CD4-positive, alpha-beta memory T cell (primary cell): ENCODE measurements at regions of chr22 and their contacts with region 1.

Region 1: GRCh38 chr22:40714192-40714951 is 35.1 kb downstream of the MCHR1 start:
- DNase-seq: no peak
- H3K4me3 ChIP-seq: no peak overlapping the region
- H3K4me3 Mint-ChIP-seq: peak overlapping the region in 1 of 8 donors; percentile 12
- H3K27ac ChIP-seq: no peak overlapping the region
- H3K27ac Mint-ChIP-seq: peak overlapping the region in 1 of 7 donors; percentile 42
- H3K4me1 ChIP-seq: peaks cover 9% of the 10 kb centered on the region
- H3K4me1 Mint-ChIP-seq: peaks cover 10 to 16% (median 13%) of the 10 kb centered on the region in 4 donors
- H3K27me3 ChIP-seq: no peaks in the 10 kb centered on the region
- H3K27me3 Mint-ChIP-seq: no peaks in the 10 kb centered on the region

Region 2: GRCh38 chr22:40728731-40729189 is 14.4 kb after region 1 on chr22:
- CTCF ChIA-PET with region 1: interaction called, 4 read pairs
- POLR2A ChIA-PET with region 1: interaction called, 21 read pairs
- intact Hi-C with region 1: loop called (anchors 1 kb)
- DNase-seq: peak; percentile 67 to 84 (median 76)
- H3K4me3 ChIP-seq: peak overlapping the region in 1 of 2 donors; percentile 17
- H3K4me3 Mint-ChIP-seq: peak overlapping the region; percentile 32 to 82 (median 73)
- H3K27ac ChIP-seq: peak overlapping the region; percentile 30
- H3K27ac Mint-ChIP-seq: peak overlapping the region; percentile 83 to 97 (median 95)
- H3K4me1 ChIP-seq: peaks cover 69% of the 10 kb centered on the region
- H3K4me1 Mint-ChIP-seq: peaks cover 35 to 63% (median 49%) of the 10 kb centered on the region in 4 donors
- H3K27me3 ChIP-seq: no peaks in the 10 kb centered on the region
- H3K27me3 Mint-ChIP-seq: no peaks in the 10 kb centered on the region

Region 3: GRCh38 chr22:40757071-40757470 is 42.7 kb after region 1 on chr22:
- CTCF ChIA-PET with region 1: interaction called, 15 read pairs
- POLR2A ChIA-PET with region 1: interaction called, 4 read pairs
- intact Hi-C with region 1: loop called (anchors 1 kb)
- DNase-seq: no peak
- H3K4me3 ChIP-seq: no peak overlapping the region
- H3K4me3 Mint-ChIP-seq: no peak overlapping the region
- H3K27ac ChIP-seq: no peak overlapping the region
- H3K27ac Mint-ChIP-seq: no peak overlapping the region
- H3K4me1 ChIP-seq: no peaks in the 10 kb centered on the region
- H3K4me1 Mint-ChIP-seq: peaks cover 0 to 1% (median 0%) of the 10 kb centered on the region in 4 donors
- H3K27me3 ChIP-seq: no peaks in the 10 kb centered on the region
- H3K27me3 Mint-ChIP-seq: no peaks in the 10 kb centered on the region

Region 4: DNA sequence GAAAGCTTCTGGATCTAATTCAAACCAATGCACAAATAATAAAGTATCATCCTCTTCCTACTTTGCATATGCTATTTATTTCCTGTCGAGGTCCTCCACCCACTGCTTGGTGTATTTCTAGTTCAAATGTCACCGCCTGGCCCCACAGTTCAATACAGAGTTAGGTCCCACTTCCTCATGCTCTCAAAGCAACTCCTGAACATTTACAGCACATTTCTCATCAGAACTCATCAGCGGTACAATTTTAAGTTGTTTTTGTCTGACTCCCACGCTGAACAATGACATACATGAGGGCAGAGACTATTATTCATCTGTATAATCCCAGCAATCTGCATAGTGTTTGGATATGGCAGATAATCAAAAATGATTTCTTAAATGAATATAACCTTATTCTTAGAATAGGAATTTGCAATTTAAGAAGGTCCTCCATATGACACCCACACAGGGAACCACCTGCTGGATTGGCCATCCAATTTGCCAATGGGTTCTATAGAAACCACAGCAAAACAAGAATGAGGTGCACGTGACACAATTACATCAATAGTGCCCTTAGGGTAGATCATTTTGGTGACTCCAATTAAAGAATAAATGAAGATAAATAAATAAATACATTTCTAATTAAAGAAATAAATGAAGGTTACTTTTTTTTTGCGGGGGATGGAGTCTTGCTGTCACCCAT is 50.5 kb after region 1 on chr22:
- CTCF ChIA-PET with region 1: interaction called, 15 read pairs
- POLR2A ChIA-PET with region 1: interaction called, 4 read pairs
- intact Hi-C with region 1: loop called (anchors 1 kb)
- DNase-seq: peak in 4 of 5 donors; percentile 11 to 25 (median 17)
- H3K4me3 ChIP-seq: no peak overlapping the region
- H3K4me3 Mint-ChIP-seq: peak overlapping the region in 7 of 8 donors; percentile 10 to 77 (median 48)
- H3K27ac ChIP-seq: no peak overlapping the region
- H3K27ac Mint-ChIP-seq: peak overlapping the region; percentile 64 to 94 (median 88)
- H3K4me1 ChIP-seq: peaks cover 19% of the 10 kb centered on the region
- H3K4me1 Mint-ChIP-seq: peaks cover 11 to 19% (median 15%) of the 10 kb centered on the region in 4 donors
- H3K27me3 ChIP-seq: no peaks in the 10 kb centered on the region
- H3K27me3 Mint-ChIP-seq: no peaks in the 10 kb centered on the region